Endothelial cell of umbilical vein (primary cell): ENCODE measurements at regions of chr19 and their contacts with region 1.

Region 1: DNA sequence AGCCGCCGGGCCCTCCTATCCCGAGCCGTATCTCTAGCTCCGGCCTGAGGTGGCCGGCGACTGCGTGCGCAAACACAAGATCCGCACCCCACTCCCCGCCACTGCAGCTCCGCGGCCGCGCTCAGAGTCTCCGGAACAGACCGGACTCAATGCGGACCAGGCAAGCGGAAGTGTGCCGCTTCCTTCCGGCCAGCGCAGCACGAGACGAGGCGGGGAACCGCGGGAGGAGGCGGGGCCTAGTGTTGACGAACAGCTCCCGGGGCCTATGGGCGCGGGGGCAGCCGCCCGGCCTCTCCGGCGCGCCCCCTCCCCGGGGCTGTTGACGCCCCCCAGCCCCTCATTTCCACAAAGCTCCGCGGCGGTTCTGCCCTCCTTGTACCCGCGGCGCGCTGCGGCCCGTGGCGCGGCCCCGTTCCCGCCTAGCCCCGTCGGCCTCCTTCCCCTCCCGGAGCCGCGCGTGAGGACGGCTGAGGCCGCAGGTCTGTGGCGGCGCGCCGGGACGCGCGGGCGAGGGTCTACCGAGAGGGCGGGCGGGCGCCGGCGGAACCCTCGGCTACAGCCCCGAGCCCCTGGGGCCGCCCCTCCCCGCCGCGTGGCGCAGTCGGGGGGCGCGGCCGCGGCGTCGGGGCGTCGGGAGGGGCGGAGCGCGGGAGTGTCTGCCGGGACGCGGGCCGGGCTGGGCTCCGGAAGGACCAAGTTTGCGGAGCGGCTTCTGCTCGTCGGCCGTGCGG is at the start of gene DPY19L3:
- DNase-seq: peak; percentile 93
- H3K4me3 ChIP-seq: peak within 1 kb of the TSS; percentile 43 to 97 (median 72)
- H3K27ac ChIP-seq: peak within 1 kb of the TSS; percentile 95
- H3K4me1 ChIP-seq: peaks cover 8% of the 10 kb centered on the region
- H3K27me3 ChIP-seq: no peaks in the 10 kb centered on the region
- CTCF ChIP-seq: no peak
- POLR2A ChIP-seq: peak; percentile 98
- total RNA-seq, gene DPY19L3: 39.3 and 39.5 TPM in 2 replicates

Region 2: DNA sequence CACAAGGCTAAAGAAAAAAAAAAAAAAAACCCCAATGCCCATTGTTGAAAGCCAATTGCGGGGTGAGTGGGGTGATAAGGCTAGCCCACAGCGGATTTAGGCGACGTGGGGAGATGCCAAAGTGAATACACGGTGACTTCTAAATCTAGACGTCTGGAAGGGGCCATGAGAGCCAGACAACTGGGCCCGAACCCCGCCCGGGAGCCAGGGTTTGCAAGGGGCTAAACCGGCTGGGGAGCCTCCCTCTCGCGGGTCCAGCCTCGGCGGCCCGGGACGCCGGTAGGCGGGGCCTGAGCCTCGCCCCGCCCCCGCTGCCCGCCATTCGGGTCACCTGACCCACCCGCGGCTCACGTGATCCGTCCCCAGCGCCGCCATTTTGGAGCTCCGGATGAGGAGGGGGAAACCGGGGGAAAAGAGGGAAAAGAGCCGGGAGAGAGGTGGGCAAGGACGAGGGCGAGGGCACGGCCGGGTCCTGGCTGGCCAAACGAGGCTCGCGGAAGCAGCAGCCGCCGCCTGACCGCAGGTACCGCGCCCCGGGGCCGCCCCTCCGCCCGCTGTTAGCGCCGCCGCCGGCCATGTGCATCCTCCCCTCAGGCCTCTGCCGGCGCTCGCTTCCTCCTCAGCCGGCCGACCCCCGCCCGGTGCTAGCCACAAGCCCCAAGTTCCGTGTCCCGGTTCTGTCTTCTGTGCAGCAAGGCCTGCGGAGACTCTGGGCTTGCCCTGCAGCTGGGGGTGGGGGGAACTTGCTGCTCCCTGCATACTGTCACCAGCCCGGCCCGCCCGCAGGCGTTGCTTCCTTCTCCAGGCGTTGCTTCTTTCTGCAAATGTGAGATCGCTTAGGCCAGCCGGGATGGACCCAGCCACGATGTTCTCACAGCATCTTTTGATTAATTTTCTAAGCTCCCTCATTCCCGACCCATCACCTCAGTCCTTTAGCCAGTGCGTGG is 60.1 kb before region 1 on chr19 and contains the start of gene ZNF507:
- CTCF ChIA-PET with region 1: no interaction called
- POLR2A ChIA-PET with region 1: interaction called, 6 read pairs
- dilution Hi-C with region 1: no loop called
- intact Hi-C with region 1: loop called (anchors 1 kb)
- DNase-seq: peak; percentile 78
- H3K4me3 ChIP-seq: peak within 1 kb of the TSS; percentile 88 to 93 (median 92)
- H3K27ac ChIP-seq: peak within 1 kb of the TSS; percentile 73
- H3K4me1 ChIP-seq: peaks cover 13% of the 10 kb centered on the region
- H3K27me3 ChIP-seq: peaks cover 0 to 2% of the 10 kb centered on the region in 2 experiments
- CTCF ChIP-seq: no peak
- POLR2A ChIP-seq: peak; percentile 54
- total RNA-seq, gene ZNF507: 20.3 and 23.0 TPM in 2 replicates

Region 3: DNA sequence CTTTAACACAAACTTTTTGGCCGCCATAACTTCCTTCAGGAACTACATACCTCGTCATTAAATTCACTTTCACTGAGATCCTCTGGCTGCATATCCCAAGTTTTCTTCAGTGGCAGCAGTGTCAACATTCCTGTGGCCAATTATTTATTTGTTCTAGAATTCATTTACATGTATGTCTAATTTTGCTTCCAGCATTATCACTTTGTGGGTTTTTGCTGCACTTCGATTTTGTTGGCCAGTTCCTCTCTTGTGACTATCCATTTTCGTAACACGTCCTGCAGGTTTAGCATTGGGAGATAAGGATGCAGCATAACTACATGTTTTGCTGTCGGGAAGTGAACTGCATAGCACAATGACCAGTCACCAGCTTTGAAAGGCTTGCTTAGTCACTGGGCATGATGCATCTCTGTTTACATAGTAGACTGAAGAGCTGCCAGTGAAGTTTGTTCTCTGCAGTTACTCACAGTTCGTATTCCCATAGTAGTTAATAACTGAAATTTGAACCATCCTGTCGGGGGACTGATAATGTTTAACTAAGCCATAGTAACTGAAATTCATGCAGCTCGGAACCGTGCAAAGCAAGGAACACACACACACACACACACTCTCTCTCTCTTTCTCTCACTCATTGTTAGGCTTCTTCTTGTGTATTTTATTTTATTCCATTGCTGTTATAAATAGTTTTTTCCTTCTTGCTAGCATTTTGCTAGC is 31.9 kb before region 1 on chr19:
- CTCF ChIA-PET with region 1: interaction called, 4 read pairs
- POLR2A ChIA-PET with region 1: interaction called, 12 read pairs
- dilution Hi-C with region 1: no loop called
- intact Hi-C with region 1: loop called (anchors 1 kb)
- DNase-seq: peak; percentile 96
- H3K4me3 ChIP-seq: peak overlapping the region in 1 of 3 experiments; percentile 36
- H3K27ac ChIP-seq: peak overlapping the region; percentile 89
- H3K4me1 ChIP-seq: peaks cover 22% of the 10 kb centered on the region
- H3K27me3 ChIP-seq: no peaks in the 10 kb centered on the region
- CTCF ChIP-seq: no peak
- POLR2A ChIP-seq: no peak

Region 4: DNA sequence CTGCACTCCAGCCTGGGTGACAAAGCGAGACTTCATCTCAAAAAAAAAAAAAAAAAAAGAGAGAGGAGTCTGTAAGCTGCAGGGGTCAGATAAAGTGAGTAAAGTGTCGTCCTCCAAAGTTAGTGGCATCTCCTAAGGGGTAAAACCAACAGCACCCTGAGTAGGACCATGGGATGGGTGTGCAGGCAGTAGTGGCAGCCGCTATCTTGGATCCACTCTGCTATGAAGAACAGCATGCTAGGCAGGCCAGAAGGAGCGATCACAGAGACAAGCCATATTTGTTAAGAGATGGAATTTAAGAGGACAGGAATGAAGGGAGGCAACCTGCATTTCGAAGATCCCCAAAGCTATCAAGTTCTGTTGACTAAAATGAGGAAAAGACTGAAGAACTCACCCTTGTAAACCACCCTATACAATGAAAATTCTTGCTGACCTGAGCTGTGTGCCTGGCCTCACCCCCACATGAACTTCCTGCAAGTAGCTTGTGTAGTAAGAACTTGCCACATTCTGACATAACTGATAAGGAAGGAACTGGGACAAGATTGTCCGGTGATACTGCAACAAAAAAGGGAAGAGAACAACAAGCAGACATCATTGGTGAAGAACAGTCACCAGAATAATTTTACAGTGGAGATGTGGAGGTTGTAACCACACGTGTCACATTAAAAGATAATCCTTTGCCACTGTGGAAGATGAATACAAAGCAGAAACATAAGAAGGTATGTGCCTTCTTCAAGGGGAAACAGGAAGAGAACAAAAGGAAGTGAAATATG is 16.2 kb after region 1 on chr19:
- CTCF ChIA-PET with region 1: interaction called, 6 read pairs
- POLR2A ChIA-PET with region 1: interaction called, 3 read pairs
- dilution Hi-C with region 1: no loop called
- intact Hi-C with region 1: loop called (anchors 1 kb)
- DNase-seq: peak; percentile 59
- H3K4me3 ChIP-seq: peak overlapping the region in 1 of 3 experiments; percentile 14
- H3K27ac ChIP-seq: peak overlapping the region; percentile 16
- H3K4me1 ChIP-seq: peaks cover 25% of the 10 kb centered on the region
- H3K27me3 ChIP-seq: no peaks in the 10 kb centered on the region
- CTCF ChIP-seq: no peak
- POLR2A ChIP-seq: no peak

Region 5: DNA sequence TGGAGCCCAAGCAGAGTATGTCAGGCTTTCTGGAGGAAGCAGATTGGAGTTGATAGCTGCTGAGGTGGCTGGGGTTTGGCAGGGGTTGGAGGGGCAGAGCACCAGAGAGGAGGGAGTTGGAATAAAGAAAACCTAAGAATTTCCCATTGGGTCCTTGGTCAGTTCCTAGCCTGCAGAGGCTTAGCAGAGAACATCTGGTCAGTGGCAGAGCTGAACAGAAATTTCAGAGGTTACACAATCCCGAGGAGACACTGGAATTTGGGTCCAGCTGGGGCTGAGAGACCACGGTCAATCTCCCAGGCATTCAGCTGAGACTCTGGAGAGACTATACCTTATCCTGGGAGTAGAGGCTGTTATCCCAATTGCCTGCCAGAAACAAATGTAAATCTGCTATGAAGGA is 84.4 kb after region 1 on chr19:
- CTCF ChIA-PET with region 1: no interaction called
- POLR2A ChIA-PET with region 1: no interaction called
- dilution Hi-C with region 1: no loop called
- intact Hi-C with region 1: no loop called
- DNase-seq: no peak
- H3K4me3 ChIP-seq: no peak overlapping the region
- H3K27ac ChIP-seq: no peak overlapping the region
- H3K4me1 ChIP-seq: no peaks in the 10 kb centered on the region
- H3K27me3 ChIP-seq: no peaks in the 10 kb centered on the region
- CTCF ChIP-seq: no peak
- POLR2A ChIP-seq: no peak

Region 6: GRCh38 chr19:32580901-32581703 is 175.5 kb after region 1 on chr19 and contains the start of gene PDCD5:
- CTCF ChIA-PET with region 1: no interaction called
- POLR2A ChIA-PET with region 1: no interaction called
- dilution Hi-C with region 1: no loop called
- intact Hi-C with region 1: loop called (anchors 2 kb)
- DNase-seq: peak; percentile 94
- H3K4me3 ChIP-seq: peak within 1 kb of the TSS; percentile 57 to 83 (median 74)
- H3K27ac ChIP-seq: peak within 1 kb of the TSS; percentile 48
- H3K4me1 ChIP-seq: peaks cover 11% of the 10 kb centered on the region
- H3K27me3 ChIP-seq: peaks cover 0 to 2% of the 10 kb centered on the region in 2 experiments
- CTCF ChIP-seq: no peak
- POLR2A ChIP-seq: peak; percentile 85
- total RNA-seq, gene PDCD5: 154 and 168 TPM in 2 replicates

Region 7: DNA sequence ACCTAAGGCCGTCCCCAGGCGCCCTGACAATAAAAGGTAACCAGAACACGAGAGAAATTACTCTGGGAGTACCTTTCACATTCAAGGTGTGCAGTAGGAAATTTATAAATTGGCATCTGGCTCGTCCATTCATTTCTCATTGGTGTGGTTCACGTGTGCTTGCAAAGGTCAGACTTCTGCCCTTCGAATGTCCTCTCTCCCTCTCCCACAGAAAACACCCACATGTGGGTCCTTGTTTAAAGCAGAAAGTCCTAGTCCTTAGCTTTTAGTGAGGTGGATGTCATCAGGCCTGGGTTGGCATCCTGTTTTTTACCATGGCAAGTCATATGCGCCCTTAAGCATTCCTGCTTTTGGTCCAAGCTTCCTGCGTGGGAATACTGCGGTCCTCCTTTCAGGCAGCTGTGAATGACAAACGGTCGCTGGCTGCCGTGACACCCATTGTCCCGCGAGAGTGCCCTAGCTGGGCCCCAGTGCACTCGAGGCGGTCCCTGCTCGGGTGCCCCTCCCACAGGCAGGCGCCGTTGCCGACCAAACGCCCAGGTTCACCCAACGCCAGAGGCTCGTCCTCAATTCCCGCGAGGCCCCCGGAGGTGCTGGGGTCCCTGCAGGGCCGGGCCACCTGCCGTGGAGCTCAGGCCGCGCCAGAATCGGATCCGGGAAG is 285.8 kb after region 1 on chr19 and contains the start of gene NUDT19:
- CTCF ChIA-PET with region 1: no interaction called
- POLR2A ChIA-PET with region 1: no interaction called
- dilution Hi-C with region 1: no loop called
- intact Hi-C with region 1: loop called (anchors 1 kb)
- DNase-seq: peak; percentile 83
- H3K4me3 ChIP-seq: peak within 1 kb of the TSS; percentile 34 to 57 (median 44)
- H3K27ac ChIP-seq: peak within 1 kb of the TSS; percentile 74
- H3K4me1 ChIP-seq: peaks cover 21% of the 10 kb centered on the region
- H3K27me3 ChIP-seq: no peaks in the 10 kb centered on the region
- CTCF ChIP-seq: no peak
- POLR2A ChIP-seq: peak; percentile 73
- total RNA-seq, gene NUDT19: 13.8 and 14.0 TPM in 2 replicates